Naive thymus-derived CD4-positive, alpha-beta T cell (primary cell): ENCODE measurements at regions of chr9 and their contacts with region 1.

Region 1: GRCh38 chr9:33225319-33226149 is 14.4 kb upstream of the SPINK4 start:
- DNase-seq: peak; percentile 36 to 73 (median 65)
- ATAC-seq: peak; percentile 76
- H3K4me3 ChIP-seq: no peak overlapping the region
- H3K4me3 Mint-ChIP-seq: no peak overlapping the region
- H3K27ac ChIP-seq: no peak overlapping the region
- H3K27ac Mint-ChIP-seq: peak overlapping the region in 3 of 9 donors; percentile 14 to 68 (median 25)
- H3K4me1 ChIP-seq: peaks cover 0 to 3% of the 10 kb centered on the region in 2 donors
- H3K4me1 Mint-ChIP-seq: peaks cover 10 to 35% (median 18%) of the 10 kb centered on the region in 7 donors
- H3K27me3 ChIP-seq: no peaks in the 10 kb centered on the region
- H3K27me3 Mint-ChIP-seq: peaks cover 0 to 6% (median 0%) of the 10 kb centered on the region in 5 donors

Region 2: DNA sequence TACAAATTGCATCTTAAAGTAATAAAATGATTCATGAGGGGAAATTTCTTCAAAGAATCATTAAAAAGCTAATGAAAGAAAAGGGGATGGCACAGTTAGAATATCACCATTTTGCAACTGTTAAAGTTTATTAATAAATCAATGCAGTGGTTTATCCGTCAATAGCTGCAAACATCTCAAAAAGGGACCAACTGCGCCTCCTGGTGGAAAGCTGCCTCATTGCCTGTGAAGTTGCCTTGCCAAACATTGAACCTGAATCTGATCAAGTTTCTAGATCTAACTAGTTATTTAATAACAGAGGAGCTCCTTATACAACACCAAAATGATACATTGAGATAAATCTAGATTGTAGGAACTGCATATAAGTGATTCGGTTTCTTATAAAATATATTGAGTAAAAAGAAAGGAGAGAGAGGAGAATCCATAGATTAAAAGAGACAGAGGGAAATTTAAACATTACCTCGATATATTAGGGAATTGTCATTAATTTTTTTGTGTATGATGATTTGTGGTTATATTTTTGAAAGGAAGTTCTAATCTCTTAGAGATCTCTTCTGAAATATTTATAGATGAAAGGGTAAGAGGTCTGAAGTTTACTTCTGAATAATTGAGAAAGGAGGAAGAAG is 645.7 kb before region 1 on chr9:
- CTCF ChIA-PET with region 1: no interaction called
- POLR2A ChIA-PET with region 1: no interaction called
- intact Hi-C with region 1: loop called in 1 of 2 experiments (anchors 2 kb)
- DNase-seq: peak; percentile 53 to 77 (median 66)
- ATAC-seq: peak; percentile 81
- H3K4me3 ChIP-seq: no peak overlapping the region
- H3K4me3 Mint-ChIP-seq: no peak overlapping the region
- H3K27ac ChIP-seq: no peak overlapping the region
- H3K27ac Mint-ChIP-seq: peak overlapping the region in 1 of 9 donors; percentile 48
- H3K4me1 ChIP-seq: no peaks in the 10 kb centered on the region
- H3K4me1 Mint-ChIP-seq: peaks cover 0 to 8% (median 0%) of the 10 kb centered on the region in 7 donors
- H3K27me3 ChIP-seq: no peaks in the 10 kb centered on the region
- H3K27me3 Mint-ChIP-seq: peaks cover 4 to 30% (median 7%) of the 10 kb centered on the region in 5 donors

Region 3: GRCh38 chr9:33106827-33107621 is 118.5 kb before region 1 on chr9:
- CTCF ChIA-PET with region 1: interaction called, 5 read pairs
- POLR2A ChIA-PET with region 1: no interaction called
- intact Hi-C with region 1: loop called in 1 of 2 experiments (anchors 1 kb)
- DNase-seq: no peak
- ATAC-seq: no peak
- H3K4me3 ChIP-seq: no peak overlapping the region
- H3K4me3 Mint-ChIP-seq: no peak overlapping the region
- H3K27ac ChIP-seq: no peak overlapping the region
- H3K27ac Mint-ChIP-seq: peak overlapping the region in 1 of 9 donors; percentile 55
- H3K4me1 ChIP-seq: no peaks in the 10 kb centered on the region
- H3K4me1 Mint-ChIP-seq: peaks cover 0 to 15% (median 0%) of the 10 kb centered on the region in 7 donors
- H3K27me3 ChIP-seq: no peaks in the 10 kb centered on the region
- H3K27me3 Mint-ChIP-seq: no peaks in the 10 kb centered on the region

Region 4: DNA sequence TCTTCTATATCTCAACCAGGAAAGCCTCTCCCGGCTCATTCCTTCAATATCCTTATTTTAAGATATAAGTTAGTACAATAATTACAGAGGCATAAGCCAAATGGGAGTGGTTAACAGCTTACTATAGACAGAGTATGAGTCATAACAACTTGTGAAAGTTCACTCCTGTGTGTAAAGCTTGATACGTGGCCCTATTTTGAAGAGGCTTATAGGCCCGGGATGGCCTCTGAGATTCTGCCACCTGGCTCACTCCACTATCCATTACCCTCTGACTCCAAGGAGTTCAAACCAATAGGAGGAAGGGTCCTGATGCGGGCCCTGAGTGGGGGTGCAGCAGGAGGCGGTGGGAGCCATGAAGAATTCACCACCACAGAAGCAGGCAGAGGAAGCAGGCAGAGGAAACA is 95.0 kb before region 1 on chr9:
- CTCF ChIA-PET with region 1: no interaction called
- POLR2A ChIA-PET with region 1: no interaction called
- intact Hi-C with region 1: loop called in 1 of 2 experiments (anchors 1 kb)
- DNase-seq: no peak
- ATAC-seq: peak; percentile 77
- H3K4me3 ChIP-seq: no peak overlapping the region
- H3K4me3 Mint-ChIP-seq: peak overlapping the region in 2 of 10 donors; percentile 46 to 61
- H3K27ac ChIP-seq: no peak overlapping the region
- H3K27ac Mint-ChIP-seq: peak overlapping the region in 8 of 9 donors; percentile 35 to 92 (median 78)
- H3K4me1 ChIP-seq: peaks cover 0 to 4% of the 10 kb centered on the region in 2 donors
- H3K4me1 Mint-ChIP-seq: peaks cover 10 to 41% (median 39%) of the 10 kb centered on the region in 7 donors
- H3K27me3 ChIP-seq: no peaks in the 10 kb centered on the region
- H3K27me3 Mint-ChIP-seq: no peaks in the 10 kb centered on the region

Region 5: GRCh38 chr9:33177639-33178038 is 47.9 kb before region 1 on chr9:
- CTCF ChIA-PET with region 1: no interaction called
- POLR2A ChIA-PET with region 1: no interaction called
- intact Hi-C with region 1: loop called in 1 of 2 experiments (anchors 2 kb)
- DNase-seq: no peak
- ATAC-seq: no peak
- H3K4me3 ChIP-seq: no peak overlapping the region
- H3K4me3 Mint-ChIP-seq: no peak overlapping the region
- H3K27ac ChIP-seq: no peak overlapping the region
- H3K27ac Mint-ChIP-seq: no peak overlapping the region
- H3K4me1 ChIP-seq: no peaks in the 10 kb centered on the region
- H3K4me1 Mint-ChIP-seq: peaks cover 0 to 4% (median 3%) of the 10 kb centered on the region in 7 donors
- H3K27me3 ChIP-seq: no peaks in the 10 kb centered on the region
- H3K27me3 Mint-ChIP-seq: peaks cover 0 to 33% (median 0%) of the 10 kb centered on the region in 5 donors

Region 6: DNA sequence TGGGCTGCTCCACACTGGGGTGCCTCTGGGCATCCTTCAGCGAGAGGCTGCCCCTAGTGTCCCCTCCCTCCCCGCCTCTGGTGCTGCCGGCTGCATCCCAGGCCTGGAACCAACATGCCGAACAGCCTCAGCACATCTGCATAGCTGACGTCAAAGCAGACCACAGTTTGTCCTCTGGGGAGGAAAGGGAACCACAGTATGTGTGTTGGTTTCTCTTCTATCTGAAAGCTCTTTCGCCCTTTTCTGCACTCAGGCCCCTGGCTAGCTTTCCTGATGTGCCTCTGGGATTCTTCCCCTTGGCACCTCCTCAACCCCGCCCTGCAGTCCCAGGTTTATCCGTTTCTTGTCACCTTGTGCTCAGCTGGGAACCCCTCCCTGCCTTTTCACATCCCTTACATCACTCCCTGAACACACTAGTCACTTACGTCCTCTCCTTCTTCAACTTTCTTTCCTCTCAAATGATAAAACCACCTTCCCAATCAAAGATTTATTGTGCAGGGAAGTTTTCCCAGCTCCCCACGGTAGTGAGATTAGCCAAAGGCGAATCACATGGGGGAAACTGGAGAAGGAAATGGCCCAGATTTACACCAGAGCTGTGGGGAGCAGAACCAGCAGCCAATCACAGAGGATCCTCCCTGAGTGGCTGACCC is 22.9 kb before region 1 on chr9:
- CTCF ChIA-PET with region 1: no interaction called
- POLR2A ChIA-PET with region 1: no interaction called
- intact Hi-C with region 1: loop called in 1 of 2 experiments (anchors 2 kb)
- DNase-seq: peak in 1 of 9 donors; percentile 37
- ATAC-seq: peak; percentile 89
- H3K4me3 ChIP-seq: no peak overlapping the region
- H3K4me3 Mint-ChIP-seq: peak overlapping the region in 1 of 10 donors; percentile 73
- H3K27ac ChIP-seq: no peak overlapping the region
- H3K27ac Mint-ChIP-seq: peak overlapping the region in 3 of 9 donors; percentile 22 to 60 (median 57)
- H3K4me1 ChIP-seq: peaks cover 0 to 4% of the 10 kb centered on the region in 2 donors
- H3K4me1 Mint-ChIP-seq: peaks cover 0 to 24% (median 4%) of the 10 kb centered on the region in 7 donors
- H3K27me3 ChIP-seq: no peaks in the 10 kb centered on the region
- H3K27me3 Mint-ChIP-seq: peaks cover 0 to 22% (median 0%) of the 10 kb centered on the region in 5 donors

Region 7: GRCh38 chr9:33264473-33265177 is 39.1 kb after region 1 on chr9 and contains the starts of genes BAG1 and CHMP5:
- CTCF ChIA-PET with region 1: no interaction called
- POLR2A ChIA-PET with region 1: no interaction called
- intact Hi-C with region 1: loop called in 1 of 2 experiments (anchors 1 kb)
- DNase-seq: peak; percentile 98 to 100 (median 100)
- ATAC-seq: peak; percentile 99
- H3K4me3 ChIP-seq: peak within 1 kb of the TSS; percentile 95
- H3K4me3 Mint-ChIP-seq: peak within 1 kb of the TSS; percentile 82 to 98 (median 92)
- H3K27ac ChIP-seq: peak within 1 kb of the TSS; percentile 88
- H3K27ac Mint-ChIP-seq: peak within 1 kb of the TSS; percentile 84 to 99 (median 97)
- H3K4me1 ChIP-seq: peaks cover 15 to 34% of the 10 kb centered on the region in 2 donors
- H3K4me1 Mint-ChIP-seq: peaks cover 36 to 66% (median 55%) of the 10 kb centered on the region in 7 donors
- H3K27me3 ChIP-seq: no peaks in the 10 kb centered on the region
- H3K27me3 Mint-ChIP-seq: peaks cover 0 to 2% (median 0%) of the 10 kb centered on the region in 5 donors
- total RNA-seq, gene BAG1: 48.6 to 77.2 (median 61.0) TPM
- total RNA-seq, gene CHMP5: 21.4 to 74.6 (median 35.3) TPM